Panc1 (cell line): ENCODE measurements at regions of chr12 and their contacts with region 1.

Region 1: GRCh38 chr12:120677765-120678473 is 9.0 kb upstream of the MLEC start:
- DNase-seq: no peak
- ATAC-seq: no peak
- H3K4me3 ChIP-seq: no peak overlapping the region
- H3K27ac ChIP-seq: no peak overlapping the region
- H3K4me1 ChIP-seq: no peaks in the 10 kb centered on the region
- H3K27me3 ChIP-seq: no peaks in the 10 kb centered on the region
- CTCF ChIP-seq: no peak

Region 2: DNA sequence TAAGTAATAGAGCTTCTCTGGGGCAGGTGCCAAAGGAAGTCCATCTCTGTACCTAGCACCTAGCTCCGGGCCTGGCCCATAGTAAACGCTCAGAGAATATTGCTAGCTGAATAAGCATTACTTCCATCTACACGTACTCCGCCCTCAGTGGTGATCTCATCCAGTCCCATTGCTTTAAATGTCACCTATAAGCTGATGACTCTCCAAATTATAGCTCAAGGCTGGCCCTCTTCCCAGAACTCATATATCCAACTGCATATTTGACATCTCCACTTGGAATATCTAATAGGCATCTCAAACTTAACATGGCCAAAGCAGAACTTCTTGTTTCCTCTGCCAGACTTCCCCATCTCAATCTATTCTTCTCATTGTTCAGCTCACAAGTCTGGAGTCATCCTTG is 188.9 kb before region 1 on chr12:
- CTCF ChIA-PET with region 1: interaction called, 11 read pairs
- POLR2A ChIA-PET with region 1: no interaction called
- in situ Hi-C with region 1: no loop called
- intact Hi-C with region 1: no loop called
- DNase-seq: no peak
- ATAC-seq: no peak
- H3K4me3 ChIP-seq: no peak overlapping the region
- H3K27ac ChIP-seq: no peak overlapping the region
- H3K4me1 ChIP-seq: no peaks in the 10 kb centered on the region
- H3K27me3 ChIP-seq: no peaks in the 10 kb centered on the region
- CTCF ChIP-seq: no peak

Region 3: GRCh38 chr12:120639771-120640721 is 37.9 kb before region 1 on chr12 and contains the start of gene CABP1:
- CTCF ChIA-PET with region 1: interaction called, 11 read pairs
- POLR2A ChIA-PET with region 1: no interaction called
- in situ Hi-C with region 1: no loop called
- intact Hi-C with region 1: no loop called
- DNase-seq: no peak
- ATAC-seq: peak; percentile 84
- H3K4me3 ChIP-seq: peak within 1 kb of the TSS; percentile 28 to 37
- H3K27ac ChIP-seq: no peak within 1 kb of the TSS
- H3K4me1 ChIP-seq: no peaks in the 10 kb centered on the region
- H3K27me3 ChIP-seq: peaks cover 9% of the 10 kb centered on the region
- CTCF ChIP-seq: peak; percentile 68
- total RNA-seq, gene CABP1: not detected